Breast epithelium (tissue), 4 donors: ENCODE measurements at regions of chr6 and their contacts with region 1.

Region 1: GRCh38 chr6:147154454-147154853 is 49.8 kb upstream of the STXBP5 start:
- DNase-seq: no peak
- H3K4me3 ChIP-seq: no peak overlapping the region
- H3K27ac ChIP-seq: no peak overlapping the region
- H3K4me1 ChIP-seq: no peaks in the 10 kb centered on the region
- H3K27me3 ChIP-seq: no peaks in the 10 kb centered on the region
- CTCF ChIP-seq: no peak
- POLR2A ChIP-seq: no peak

Region 2: GRCh38 chr6:145544041-145544440 is 1610.4 kb before region 1 on chr6:
- intact Hi-C with region 1: no loop called
- DNase-seq: no peak
- H3K4me3 ChIP-seq: no peak overlapping the region
- H3K27ac ChIP-seq: no peak overlapping the region
- H3K4me1 ChIP-seq: no peaks in the 10 kb centered on the region
- H3K27me3 ChIP-seq: no peaks in the 10 kb centered on the region
- CTCF ChIP-seq: no peak
- POLR2A ChIP-seq: no peak

Region 3: DNA sequence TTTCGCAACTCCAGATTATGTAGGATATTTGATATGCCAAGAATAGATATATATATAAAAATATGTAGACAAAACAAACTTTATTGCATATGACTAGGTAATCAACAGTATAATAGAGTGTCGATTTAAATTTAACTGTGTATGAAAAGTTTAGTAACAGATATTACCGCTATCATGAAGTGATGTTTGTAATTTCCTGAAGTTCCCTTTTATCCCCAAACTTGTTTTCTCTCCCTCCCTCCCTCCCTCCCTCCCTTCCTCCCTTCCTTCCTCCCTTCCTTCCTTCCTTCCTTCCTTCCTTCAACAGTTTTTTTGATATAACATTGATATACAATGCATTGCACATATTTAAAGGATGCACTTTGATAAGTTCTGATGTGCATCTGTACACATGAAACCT is 540.5 kb before region 1 on chr6:
- intact Hi-C with region 1: no loop called
- DNase-seq: no peak
- H3K4me3 ChIP-seq: no peak overlapping the region
- H3K27ac ChIP-seq: no peak overlapping the region
- H3K4me1 ChIP-seq: no peaks in the 10 kb centered on the region
- H3K27me3 ChIP-seq: no peaks in the 10 kb centered on the region
- CTCF ChIP-seq: no peak
- POLR2A ChIP-seq: no peak

Region 4: DNA sequence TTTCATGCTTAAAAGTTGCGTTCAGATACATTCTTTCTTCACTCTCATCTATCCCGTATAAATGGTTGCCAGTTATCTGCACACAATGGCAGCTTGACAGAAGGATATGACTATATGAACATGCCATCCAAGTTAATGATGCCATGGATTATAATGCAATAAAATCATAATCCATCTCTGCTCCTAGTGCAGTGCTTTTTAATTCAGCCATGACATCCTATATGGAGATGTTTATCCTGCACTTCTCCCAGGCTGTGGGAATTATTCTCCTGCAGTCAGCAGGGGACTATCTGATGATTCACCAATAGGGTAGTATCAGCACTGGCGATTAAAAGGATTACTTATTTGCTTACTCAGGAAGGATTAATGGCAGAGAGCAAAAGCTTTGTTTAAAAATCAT is 627.8 kb after region 1 on chr6:
- intact Hi-C with region 1: loop called (anchors 5 kb)
- DNase-seq: no peak
- H3K4me3 ChIP-seq: no peak overlapping the region
- H3K27ac ChIP-seq: no peak overlapping the region
- H3K4me1 ChIP-seq: no peaks in the 10 kb centered on the region
- H3K27me3 ChIP-seq: no peaks in the 10 kb centered on the region
- CTCF ChIP-seq: no peak
- POLR2A ChIP-seq: no peak

Region 5: DNA sequence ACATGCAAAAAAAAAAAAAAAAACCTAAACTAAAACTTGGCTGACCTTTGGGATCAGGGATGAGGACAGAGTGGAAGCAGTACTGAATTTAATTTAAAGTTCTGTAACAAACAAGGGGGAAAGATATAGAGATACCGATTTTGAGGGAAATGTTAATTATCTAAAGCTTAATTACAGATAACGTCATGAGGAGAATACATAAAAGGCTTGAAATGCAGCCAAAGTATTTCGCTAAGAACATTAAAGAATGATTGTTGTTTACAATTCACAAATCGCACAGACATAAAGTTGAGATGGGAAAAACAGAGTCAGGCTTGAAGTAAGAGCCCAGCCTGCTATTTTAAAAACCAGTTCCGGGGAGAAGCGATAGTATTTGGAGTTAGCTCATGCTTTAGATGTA is 980.1 kb after region 1 on chr6:
- intact Hi-C with region 1: loop called (anchors 10 kb)
- DNase-seq: no peak
- H3K4me3 ChIP-seq: no peak overlapping the region
- H3K27ac ChIP-seq: no peak overlapping the region
- H3K4me1 ChIP-seq: no peaks in the 10 kb centered on the region
- H3K27me3 ChIP-seq: no peaks in the 10 kb centered on the region
- CTCF ChIP-seq: no peak
- POLR2A ChIP-seq: no peak